Naive thymus-derived CD4-positive, alpha-beta T cell (primary cell): ENCODE measurements at regions of chr5 and their contacts with region 1.

Region 1: GRCh38 chr5:142864725-142865260 is 94.6 kb downstream of the ARHGAP26 start:
- DNase-seq: no peak
- ATAC-seq: no peak
- H3K4me3 ChIP-seq: no peak overlapping the region
- H3K4me3 Mint-ChIP-seq: peak overlapping the region in 3 of 10 donors; percentile 9 to 62 (median 42)
- H3K27ac ChIP-seq: no peak overlapping the region
- H3K27ac Mint-ChIP-seq: peak overlapping the region in 6 of 9 donors; percentile 51 to 87 (median 82)
- H3K4me1 ChIP-seq: peaks cover 0 to 12% of the 10 kb centered on the region in 2 donors
- H3K4me1 Mint-ChIP-seq: peaks cover 29 to 59% (median 55%) of the 10 kb centered on the region in 7 donors
- H3K27me3 ChIP-seq: no peaks in the 10 kb centered on the region
- H3K27me3 Mint-ChIP-seq: no peaks in the 10 kb centered on the region

Region 2: DNA sequence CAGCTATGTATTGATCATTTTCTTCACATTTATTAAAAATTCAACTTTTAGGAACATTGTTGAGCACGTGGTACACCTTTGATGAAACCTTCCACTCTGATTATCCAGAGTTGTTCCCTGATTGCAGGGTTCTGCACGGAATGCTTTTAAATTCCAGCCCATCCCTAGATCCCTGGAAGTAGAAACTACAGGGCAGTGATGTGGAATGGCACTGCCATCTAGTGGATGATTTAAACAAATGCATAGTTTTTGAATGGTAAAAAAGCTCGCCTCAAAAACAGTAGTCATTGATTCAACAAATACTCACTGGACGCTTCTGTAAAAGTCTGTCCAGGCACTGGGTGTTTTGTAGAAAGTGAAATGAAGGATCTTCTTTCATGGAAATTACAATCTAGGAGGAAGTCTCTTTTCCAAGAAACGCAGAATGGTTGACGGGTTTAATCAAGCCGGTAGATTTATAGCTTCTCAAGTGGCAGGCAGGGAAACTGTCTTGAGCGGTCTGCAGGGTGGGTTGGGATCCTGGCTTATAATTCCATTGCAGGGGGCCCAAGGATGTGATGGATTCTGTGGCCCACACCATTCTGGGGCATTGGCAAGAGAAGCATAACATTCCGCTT is 23.8 kb after region 1 on chr5:
- CTCF ChIA-PET with region 1: interaction called, 4 read pairs
- POLR2A ChIA-PET with region 1: no interaction called
- intact Hi-C with region 1: loop called in 1 of 2 experiments (anchors 2 kb)
- DNase-seq: peak in 4 of 9 donors; percentile 19 to 27 (median 24)
- ATAC-seq: peak; percentile 45
- H3K4me3 ChIP-seq: no peak overlapping the region
- H3K4me3 Mint-ChIP-seq: no peak overlapping the region
- H3K27ac ChIP-seq: no peak overlapping the region
- H3K27ac Mint-ChIP-seq: no peak overlapping the region
- H3K4me1 ChIP-seq: peaks cover 0 to 8% of the 10 kb centered on the region in 2 donors
- H3K4me1 Mint-ChIP-seq: peaks cover 0 to 16% (median 5%) of the 10 kb centered on the region in 7 donors
- H3K27me3 ChIP-seq: no peaks in the 10 kb centered on the region
- H3K27me3 Mint-ChIP-seq: no peaks in the 10 kb centered on the region

Region 3: GRCh38 chr5:142900927-142901326 is 36.1 kb after region 1 on chr5:
- CTCF ChIA-PET with region 1: no interaction called
- POLR2A ChIA-PET with region 1: no interaction called
- intact Hi-C with region 1: no loop called
- DNase-seq: no peak
- ATAC-seq: no peak
- H3K4me3 ChIP-seq: no peak overlapping the region
- H3K4me3 Mint-ChIP-seq: no peak overlapping the region
- H3K27ac ChIP-seq: no peak overlapping the region
- H3K27ac Mint-ChIP-seq: peak overlapping the region in 1 of 9 donors; percentile 3
- H3K4me1 ChIP-seq: no peaks in the 10 kb centered on the region
- H3K4me1 Mint-ChIP-seq: peaks cover 0 to 7% (median 0%) of the 10 kb centered on the region in 7 donors
- H3K27me3 ChIP-seq: no peaks in the 10 kb centered on the region
- H3K27me3 Mint-ChIP-seq: no peaks in the 10 kb centered on the region

Region 4: GRCh38 chr5:144267961-144268513 is 1403.2 kb after region 1 on chr5:
- CTCF ChIA-PET with region 1: no interaction called
- POLR2A ChIA-PET with region 1: no interaction called
- intact Hi-C with region 1: no loop called
- DNase-seq: no peak
- ATAC-seq: no peak
- H3K4me3 ChIP-seq: no peak overlapping the region
- H3K4me3 Mint-ChIP-seq: no peak overlapping the region
- H3K27ac ChIP-seq: no peak overlapping the region
- H3K27ac Mint-ChIP-seq: no peak overlapping the region
- H3K4me1 ChIP-seq: no peaks in the 10 kb centered on the region
- H3K4me1 Mint-ChIP-seq: no peaks in the 10 kb centered on the region
- H3K27me3 ChIP-seq: peaks cover 0 to 4% of the 10 kb centered on the region in 2 donors
- H3K27me3 Mint-ChIP-seq: peaks cover 5 to 46% (median 38%) of the 10 kb centered on the region in 5 donors